ENCODE measurements at regions of chr1 and their contacts with region 1.

Region 1: DNA sequence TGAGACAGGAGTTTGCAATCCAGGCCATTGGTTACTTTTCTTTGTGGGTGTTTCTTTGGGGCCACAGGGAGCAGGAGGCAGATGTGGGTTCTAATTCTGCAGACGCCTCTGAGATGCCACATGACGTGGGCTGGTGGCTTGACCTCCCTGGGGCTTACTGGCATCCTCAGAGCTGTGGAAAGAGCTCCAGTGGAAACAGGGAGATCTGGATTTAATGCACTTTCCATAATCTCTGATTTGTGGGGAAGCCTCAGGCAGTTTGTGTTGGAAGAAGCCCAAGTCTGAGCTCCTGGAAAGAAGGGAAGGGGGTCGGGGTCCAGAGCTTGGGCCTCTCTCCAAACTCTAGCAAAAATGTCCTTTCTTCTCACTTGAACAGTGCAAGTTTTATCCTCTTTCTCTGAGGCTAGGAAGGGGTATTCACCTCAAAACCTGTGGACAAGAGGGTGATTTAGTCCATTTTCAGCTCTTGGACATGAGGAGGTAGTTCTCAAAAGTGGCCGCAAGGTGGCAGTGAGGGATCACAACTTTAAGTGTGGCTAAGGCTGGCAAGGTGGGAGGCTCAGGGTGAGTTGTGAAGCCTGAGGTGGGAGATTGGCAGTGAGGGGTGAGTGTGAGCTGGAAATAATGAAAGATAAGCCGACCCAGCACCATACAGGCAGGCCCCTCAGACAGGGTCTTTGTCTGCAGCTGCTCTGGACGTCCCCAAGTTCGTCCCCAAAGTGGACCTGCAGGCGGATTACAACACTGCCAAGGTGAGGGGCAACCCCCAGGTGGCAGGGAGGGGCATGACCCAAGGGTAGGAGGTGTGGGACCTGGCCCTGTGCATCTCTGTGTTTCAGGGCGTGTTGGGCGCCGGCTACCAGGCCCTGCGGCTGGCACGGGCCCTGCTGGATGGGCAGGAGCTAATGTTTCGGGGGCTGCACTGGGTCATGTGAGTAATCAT is 9.2 kb downstream of the IKBKE start:
- DNase-seq: peak; percentile 79
- H3K4me3 Mint-ChIP-seq: no peak overlapping the region
- H3K27ac Mint-ChIP-seq: peak overlapping the region; percentile 58
- H3K4me1 Mint-ChIP-seq: peaks cover 16% of the 10 kb centered on the region
- H3K27me3 Mint-ChIP-seq: no peaks in the 10 kb centered on the region

Region 2: GRCh38 chr1:206507284-206508129 is 28.1 kb after region 1 on chr1 and contains the start of gene RASSF5:
- CTCF ChIA-PET with region 1: interaction called, 15 read pairs
- DNase-seq: peak; percentile 90
- H3K4me3 Mint-ChIP-seq: peak within 1 kb of the TSS; percentile 72
- H3K27ac Mint-ChIP-seq: no peak within 1 kb of the TSS
- H3K4me1 Mint-ChIP-seq: peaks cover 32% of the 10 kb centered on the region
- H3K27me3 Mint-ChIP-seq: peaks cover 76% of the 10 kb centered on the region